ENCODE measurements at regions of chr4 and their contacts with region 1.

Region 1: GRCh38 chr4:38319456-38320342 is 344.3 kb upstream of the KLF3 start:
- DNase-seq: peak; percentile 96 to 99
- ATAC-seq: peak; percentile 97
- H3K4me3 ChIP-seq: no peak overlapping the region
- H3K27ac ChIP-seq: peak overlapping the region in 1 of 2 donors; percentile 68
- H3K4me1 ChIP-seq: no peaks in the 10 kb centered on the region
- H3K27me3 ChIP-seq: no peaks in the 10 kb centered on the region

Region 2: DNA sequence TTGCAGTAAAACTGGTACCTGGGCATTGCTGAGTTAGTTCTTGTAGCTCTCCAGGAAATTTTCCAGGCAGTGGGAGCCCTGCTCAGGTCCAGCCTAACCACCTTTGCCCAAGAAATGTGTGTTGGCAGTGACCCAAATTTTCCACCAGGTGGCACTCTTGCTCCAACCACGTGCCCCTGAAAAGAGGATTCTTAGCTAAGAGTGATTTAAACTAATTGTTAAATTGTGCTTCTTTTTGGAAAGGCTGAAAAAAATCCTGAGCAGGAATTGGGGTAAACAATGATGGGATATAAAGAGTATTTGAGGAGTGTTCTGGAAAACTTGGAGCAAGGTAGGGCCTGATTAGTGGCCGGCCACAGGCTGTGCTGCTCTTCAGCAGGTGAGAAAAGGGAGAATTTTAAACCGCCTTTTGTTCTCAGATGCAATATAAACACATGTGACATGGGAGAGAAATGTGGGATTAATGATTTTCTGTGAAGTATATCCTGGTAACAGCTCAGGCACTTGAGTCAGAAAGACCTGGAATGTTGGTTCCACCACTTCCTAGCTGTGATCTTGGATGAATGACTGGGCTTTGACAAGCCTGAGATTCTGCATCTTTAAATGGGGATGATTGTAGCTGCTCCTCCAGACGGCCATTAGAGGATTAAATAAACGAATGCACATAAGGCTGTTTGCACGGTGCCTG is 139.9 kb before region 1 on chr4:
- intact Hi-C with region 1: loop called (anchors 5 kb)
- DNase-seq: peak; percentile 75 to 85
- ATAC-seq: peak; percentile 87
- H3K4me3 ChIP-seq: no peak overlapping the region
- H3K27ac ChIP-seq: no peak overlapping the region
- H3K4me1 ChIP-seq: no peaks in the 10 kb centered on the region
- H3K27me3 ChIP-seq: no peaks in the 10 kb centered on the region

Region 3: DNA sequence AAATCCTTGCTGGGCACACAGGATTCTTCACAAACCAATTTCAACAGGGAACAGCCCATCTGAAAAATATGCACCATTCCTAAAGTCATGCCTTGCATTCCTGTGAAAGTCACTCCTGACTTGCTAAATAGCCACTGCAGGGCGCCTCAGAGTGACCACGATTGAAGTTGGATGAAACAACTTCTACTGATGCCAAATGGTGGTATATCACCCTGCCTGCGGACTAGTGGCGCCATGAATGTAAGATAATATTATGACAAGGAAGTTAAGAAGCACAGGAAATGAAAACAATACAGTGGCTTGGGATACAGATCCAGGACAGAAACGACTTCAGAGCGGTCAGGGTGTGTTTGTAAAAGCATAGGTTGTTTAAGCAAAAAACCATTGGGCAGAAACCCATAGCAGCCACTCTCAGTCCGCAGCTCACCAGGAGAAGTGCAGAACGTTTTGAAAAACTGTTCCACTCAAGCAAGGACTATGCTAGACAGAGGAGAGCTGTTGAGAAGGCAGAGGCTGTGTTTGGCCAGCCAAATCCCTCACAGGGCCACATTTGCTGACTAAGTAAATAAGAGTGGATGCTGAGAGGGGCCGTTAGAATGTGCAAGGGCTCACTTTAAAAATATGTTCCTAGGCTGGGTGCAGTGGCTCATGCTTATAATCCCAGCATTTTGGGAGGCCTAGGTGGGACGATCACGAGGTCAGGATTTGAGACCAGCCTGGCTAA is 109.1 kb before region 1 on chr4:
- intact Hi-C with region 1: loop called in 1 of 2 experiments (anchors 2 kb)
- DNase-seq: no peak
- ATAC-seq: peak; percentile 60
- H3K4me3 ChIP-seq: no peak overlapping the region
- H3K27ac ChIP-seq: peak overlapping the region; percentile 96 to 99
- H3K4me1 ChIP-seq: peaks cover 0 to 5% of the 10 kb centered on the region in 2 donors
- H3K27me3 ChIP-seq: no peaks in the 10 kb centered on the region

Region 4: GRCh38 chr4:38663801-38664705 is 344.4 kb after region 1 on chr4 and contains the start of gene KLF3:
- intact Hi-C with region 1: loop called in 1 of 2 experiments (anchors 2 kb)
- DNase-seq: peak; percentile 97
- ATAC-seq: peak; percentile 92
- H3K4me3 ChIP-seq: peak within 1 kb of the TSS; percentile 94 to 99
- H3K27ac ChIP-seq: peak within 1 kb of the TSS; percentile 96
- H3K4me1 ChIP-seq: peaks cover 0 to 2% of the 10 kb centered on the region in 2 donors
- H3K27me3 ChIP-seq: no peaks in the 10 kb centered on the region
- total RNA-seq, gene KLF3: 45.9 to 66.8 TPM

Measured in aorta (tissue), 5 donors.